RWPE1 (cell line): ENCODE measurements at regions of chr5 and their contacts with region 1.

Region 1: DNA sequence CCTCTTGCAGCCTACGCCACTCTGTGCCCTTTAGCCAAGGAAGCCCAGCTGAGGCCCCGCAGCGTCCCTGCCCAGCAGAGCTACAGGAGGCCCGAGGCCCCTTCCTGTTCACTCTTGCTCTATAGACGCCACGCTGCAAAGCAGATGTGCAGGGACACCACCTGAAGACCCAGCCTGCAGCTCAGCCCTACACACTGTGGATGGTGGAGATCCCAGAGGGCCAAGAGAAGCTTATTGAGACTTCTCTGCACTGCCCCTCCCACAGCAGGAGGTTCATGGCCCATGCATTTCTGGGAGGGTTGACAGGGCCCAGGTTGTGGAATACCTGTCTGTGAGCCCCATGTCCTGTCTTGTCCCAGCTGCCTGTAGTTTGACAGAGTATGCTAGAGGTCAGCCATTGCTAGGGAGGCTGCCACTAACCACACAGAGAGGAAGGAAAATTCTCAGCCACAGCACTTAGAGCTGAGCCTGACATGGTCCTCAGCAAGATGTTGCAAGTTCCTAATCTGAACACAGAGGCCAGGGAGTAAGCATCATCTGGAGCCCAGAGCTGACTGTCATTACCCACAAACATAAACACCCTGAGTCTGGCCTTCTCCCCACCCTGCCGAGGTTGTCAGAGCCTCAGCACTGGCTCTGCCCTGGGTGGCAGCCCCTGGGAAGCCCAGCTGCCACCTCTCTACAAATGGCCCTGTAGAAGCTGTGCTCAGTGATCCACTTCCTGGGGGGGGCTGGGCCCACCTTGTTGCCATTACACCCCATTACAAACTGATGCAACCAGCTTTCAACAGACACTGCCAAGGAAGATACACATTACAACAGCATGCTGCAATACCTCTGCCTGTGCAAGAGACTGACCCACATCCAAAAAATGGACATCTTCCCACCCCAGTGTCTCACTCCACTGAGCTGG is 33.3 kb downstream of the IRF1 start:
- DNase-seq: no peak
- H3K27ac ChIP-seq: peak overlapping the region; percentile 64
- CTCF ChIP-seq: no peak

Region 2: DNA sequence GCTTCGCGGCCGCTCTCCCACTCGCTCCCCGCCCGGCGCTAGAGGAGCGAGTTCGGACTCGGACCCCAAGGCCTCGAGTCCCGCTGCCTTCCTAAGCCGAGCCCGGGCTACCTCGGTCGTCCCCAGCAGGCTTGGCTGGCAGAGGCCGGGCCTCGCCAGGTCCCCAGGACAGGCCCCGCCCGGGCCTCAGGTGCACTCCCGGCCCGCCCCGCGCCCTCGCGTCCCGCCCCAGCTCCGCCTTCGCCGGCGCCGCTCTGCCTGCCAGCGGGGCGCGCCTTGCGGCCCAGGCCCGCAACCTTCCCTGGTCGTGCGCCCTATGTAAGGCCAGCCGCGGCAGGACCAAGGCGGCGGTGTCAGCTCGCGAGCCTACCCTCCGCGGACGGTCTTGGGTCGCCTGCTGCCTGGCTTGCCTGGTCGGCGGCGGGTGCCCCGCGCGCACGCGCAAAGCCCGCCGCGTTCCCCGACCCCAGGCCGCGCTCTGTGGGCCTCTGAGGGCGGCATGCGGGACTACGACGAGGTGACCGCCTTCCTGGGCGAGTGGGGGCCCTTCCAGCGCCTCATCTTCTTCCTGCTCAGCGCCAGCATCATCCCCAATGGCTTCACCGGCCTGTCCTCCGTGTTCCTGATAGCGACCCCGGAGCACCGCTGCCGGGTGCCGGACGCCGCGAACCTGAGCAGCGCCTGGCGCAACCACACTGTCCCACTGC is 87.6 kb before region 1 on chr5 and contains the start of gene SLC22A5:
- CTCF ChIA-PET with region 1: no interaction called
- POLR2A ChIA-PET with region 1: no interaction called
- DNase-seq: peak; percentile 76
- H3K27ac ChIP-seq: peak within 1 kb of the TSS; percentile 80
- CTCF ChIP-seq: no peak

Region 3: GRCh38 chr5:132426525-132427138 is 30.6 kb before region 1 on chr5:
- CTCF ChIA-PET with region 1: interaction called, 10 read pairs
- POLR2A ChIA-PET with region 1: no interaction called
- DNase-seq: peak; percentile 93
- H3K27ac ChIP-seq: peak overlapping the region; percentile 68
- CTCF ChIP-seq: no peak

Region 4: GRCh38 chr5:132629230-132629944 is 172.1 kb after region 1 on chr5:
- CTCF ChIA-PET with region 1: no interaction called
- POLR2A ChIA-PET with region 1: no interaction called
- DNase-seq: no peak
- H3K27ac ChIP-seq: no peak overlapping the region
- CTCF ChIP-seq: no peak